ENCODE measurements at regions of chr13 and their contacts with region 1.

Region 1: GRCh38 chr13:69524459-69525155 is 583.0 kb upstream of the ATXN8OS start:
- ATAC-seq: no peak
- H3K4me3 ChIP-seq: no peak overlapping the region
- H3K27ac ChIP-seq: no peak overlapping the region
- H3K4me1 ChIP-seq: no peaks in the 10 kb centered on the region

Region 2: DNA sequence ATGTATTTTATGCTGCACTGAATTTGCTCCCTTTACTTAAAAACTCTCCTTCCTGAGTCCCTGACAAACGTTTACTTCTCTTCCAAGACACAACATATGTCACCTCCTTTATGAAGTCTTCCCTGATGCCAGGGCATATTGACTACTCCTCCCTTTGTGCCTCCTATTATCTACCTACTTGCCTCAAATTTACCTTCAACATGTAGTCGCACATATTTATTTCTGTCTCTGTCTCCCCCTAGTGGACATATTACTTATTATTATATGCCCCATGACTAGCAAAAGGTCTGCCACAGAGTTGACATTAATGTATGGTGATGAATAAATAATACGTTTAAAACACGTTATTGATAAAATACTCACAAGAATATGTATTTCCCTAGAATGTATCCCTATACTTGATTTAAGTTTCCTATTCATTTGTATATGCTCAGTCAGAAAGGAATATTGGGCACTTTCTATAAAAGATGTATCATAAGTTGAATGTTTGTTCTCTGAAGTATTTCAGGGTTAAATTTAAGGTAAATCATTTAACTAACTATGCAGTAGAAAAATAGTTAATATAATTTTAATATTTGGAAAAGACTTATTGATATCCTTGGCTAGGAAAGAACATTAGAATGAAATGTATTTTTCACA is 332.7 kb after region 1 on chr13:
- in situ Hi-C with region 1: loop called in 2 of 9 experiments (anchors 25 kb)
- ATAC-seq: peak in 5 of 8 experiments; percentile 27 to 71 (median 43)
- H3K4me3 ChIP-seq: no peak overlapping the region
- H3K27ac ChIP-seq: no peak overlapping the region
- H3K4me1 ChIP-seq: no peaks in the 10 kb centered on the region

Region 3: DNA sequence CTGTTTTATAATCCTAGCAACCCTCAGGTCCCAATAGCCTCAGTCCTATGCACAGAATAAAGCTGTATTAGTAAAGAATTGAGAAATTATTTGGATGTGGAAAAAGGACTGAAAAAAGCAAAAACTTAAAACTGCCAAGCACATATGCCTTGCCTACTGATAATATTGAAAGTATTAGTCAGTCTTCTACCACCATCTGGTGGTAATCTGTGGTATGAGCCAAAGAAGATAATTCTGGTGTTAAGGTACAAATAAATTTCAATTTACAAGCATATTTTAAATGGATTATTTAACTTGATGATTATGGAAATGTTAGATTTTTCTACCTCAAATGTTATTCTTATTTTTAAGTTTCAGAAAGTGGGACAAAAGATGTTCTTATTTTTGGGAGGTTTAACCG is 1044.0 kb after region 1 on chr13:
- in situ Hi-C with region 1: loop called in 5 of 9 experiments (anchors 25 kb)
- ATAC-seq: peak in 4 of 8 experiments; percentile 28 to 59 (median 36)
- H3K4me3 ChIP-seq: no peak overlapping the region
- H3K27ac ChIP-seq: no peak overlapping the region
- H3K4me1 ChIP-seq: no peaks in the 10 kb centered on the region

Measured in motor neuron (in vitro differentiated cells).